ENCODE measurements at regions of chr5 and their contacts with region 1.

Region 1: DNA sequence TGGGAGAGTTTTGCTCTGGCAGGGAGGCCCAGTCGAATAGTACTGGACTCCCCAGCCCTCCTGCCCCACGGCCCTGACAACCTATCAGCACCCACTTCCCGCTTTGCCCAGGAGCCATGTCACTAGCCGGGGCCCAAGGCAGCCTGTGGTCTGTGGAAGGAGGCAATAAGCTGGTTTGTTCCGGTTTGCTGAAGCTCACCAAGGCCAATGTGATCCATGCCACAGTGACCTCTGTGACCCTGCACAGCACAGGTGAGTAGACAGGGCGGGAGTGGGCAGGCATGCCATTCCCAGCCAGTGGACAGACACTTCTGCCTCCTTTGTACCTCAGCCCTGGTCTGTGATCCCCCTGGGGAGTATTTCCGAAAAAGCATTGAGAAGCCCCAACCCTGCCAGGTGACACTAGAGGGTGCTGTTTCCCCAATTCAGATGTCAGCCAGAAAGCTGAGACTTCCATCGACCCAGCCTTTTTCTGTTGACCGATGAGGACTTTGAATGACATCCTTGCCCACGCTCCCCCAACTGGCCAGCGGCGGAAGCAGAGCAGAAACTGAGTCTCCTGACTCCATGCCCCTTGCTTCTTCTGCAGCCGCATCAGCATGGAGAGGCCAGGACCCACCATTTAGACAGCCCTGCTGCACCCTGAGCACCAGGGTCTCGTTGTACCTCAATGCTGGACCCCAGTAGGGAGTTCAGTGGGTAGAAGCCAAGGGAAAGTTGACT is 9.6 kb downstream of the PCYOX1L start:
- DNase-seq: peak; percentile 70
- ATAC-seq: peak; percentile 85
- H3K4me3 ChIP-seq: no peak overlapping the region
- H3K27ac ChIP-seq: no peak overlapping the region
- H3K4me1 ChIP-seq: 0 out of 2 replicates have a peak, but pooled peaks cover 2% of the 10 kb centered on the region
- H3K27me3 ChIP-seq: no peaks in the 10 kb centered on the region
- CTCF ChIP-seq: peak; percentile 88
- POLR2A ChIP-seq: no peak
- RAD21 ChIP-seq: peak; percentile 83

Region 2: DNA sequence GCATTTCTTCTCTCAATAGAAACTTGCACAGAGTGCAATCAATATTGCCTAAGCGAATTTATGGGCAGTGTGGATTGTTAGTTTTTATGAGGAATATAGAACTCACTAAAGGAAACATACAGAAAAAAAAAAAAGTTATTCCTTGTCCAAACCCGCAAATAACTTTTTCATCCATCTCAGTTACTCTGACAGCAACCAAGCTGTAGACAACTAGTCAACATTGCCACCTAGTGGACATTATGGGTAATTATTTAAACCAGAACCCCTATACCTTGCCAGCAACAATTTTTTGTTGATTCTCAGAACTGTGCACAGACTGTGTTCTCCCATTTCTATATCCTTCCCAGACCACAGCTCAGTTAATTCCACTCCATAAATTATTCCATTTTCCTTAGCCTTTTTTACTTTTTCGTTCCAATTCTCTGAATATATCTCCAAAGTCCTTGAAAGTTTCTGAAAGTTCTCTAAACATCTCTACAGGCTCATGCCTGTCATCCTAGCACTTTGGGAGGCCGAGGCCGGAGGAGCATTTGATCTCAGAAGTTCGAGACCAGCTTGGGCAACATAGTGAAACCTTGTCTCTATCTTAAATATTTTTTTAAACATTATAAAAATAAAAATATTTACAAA is 98.4 kb before region 1 on chr5:
- CTCF ChIA-PET with region 1: interaction called, 9 read pairs
- POLR2A ChIA-PET with region 1: no interaction called
- dilution Hi-C with region 1: no loop called
- in situ Hi-C with region 1: no loop called
- intact Hi-C with region 1: loop called (anchors 2 kb)
- DNase-seq: peak; percentile 61
- ATAC-seq: no peak
- H3K4me3 ChIP-seq: no peak overlapping the region
- H3K27ac ChIP-seq: no peak overlapping the region
- H3K4me1 ChIP-seq: peaks cover 4% of the 10 kb centered on the region
- H3K27me3 ChIP-seq: no peaks in the 10 kb centered on the region
- CTCF ChIP-seq: peak; percentile 72
- POLR2A ChIP-seq: no peak
- RAD21 ChIP-seq: peak; percentile 75

Region 3: GRCh38 chr5:149317281-149318048 is 49.9 kb before region 1 on chr5:
- CTCF ChIA-PET with region 1: interaction called, 8 read pairs
- POLR2A ChIA-PET with region 1: no interaction called
- dilution Hi-C with region 1: no loop called
- in situ Hi-C with region 1: no loop called
- intact Hi-C with region 1: loop called (anchors 1 kb)
- DNase-seq: peak; percentile 58
- ATAC-seq: peak; percentile 56
- H3K4me3 ChIP-seq: no peak overlapping the region
- H3K27ac ChIP-seq: 0 out of 2 replicates have a peak overlapping the region, but pooled peaks have one; percentile 4
- H3K4me1 ChIP-seq: peaks cover 6% of the 10 kb centered on the region
- H3K27me3 ChIP-seq: no peaks in the 10 kb centered on the region
- CTCF ChIP-seq: peak; percentile 77
- POLR2A ChIP-seq: no peak
- RAD21 ChIP-seq: peak; percentile 76

Region 4: DNA sequence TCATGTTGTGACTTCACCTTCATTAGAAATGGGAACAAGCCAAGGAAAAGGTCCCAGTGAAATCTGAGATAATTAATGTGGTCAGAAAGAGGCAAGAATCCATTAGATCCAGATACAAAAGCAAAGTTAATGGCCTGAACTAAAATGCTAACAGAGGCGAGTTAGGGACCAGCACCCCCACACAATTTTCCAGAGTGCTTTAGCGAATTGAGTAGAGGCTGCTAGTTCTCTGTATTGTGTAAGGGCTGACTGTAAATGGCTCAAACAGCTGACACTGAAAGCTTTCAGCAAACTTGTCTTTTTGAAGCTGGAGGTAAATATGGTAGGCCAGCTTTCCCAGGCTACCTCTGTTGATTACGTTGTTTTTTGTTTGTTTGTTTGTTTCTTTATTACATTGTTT is 108.4 kb after region 1 on chr5:
- CTCF ChIA-PET with region 1: no interaction called
- POLR2A ChIA-PET with region 1: no interaction called
- dilution Hi-C with region 1: no loop called
- in situ Hi-C with region 1: no loop called
- intact Hi-C with region 1: no loop called
- DNase-seq: no peak
- ATAC-seq: no peak
- H3K4me3 ChIP-seq: no peak overlapping the region
- H3K27ac ChIP-seq: no peak overlapping the region
- H3K4me1 ChIP-seq: peaks cover 9% of the 10 kb centered on the region
- H3K27me3 ChIP-seq: no peaks in the 10 kb centered on the region
- CTCF ChIP-seq: no peak
- POLR2A ChIP-seq: no peak
- RAD21 ChIP-seq: no peak